ENCODE measurements at regions of chr10 and their contacts with region 1.

Region 1: GRCh38 chr10:42638055-42638820 is at the start of gene ZNF33B:
- DNase-seq: peak; percentile 93 to 98
- H3K4me3 ChIP-seq: peak within 1 kb of the TSS; percentile 68
- H3K27ac ChIP-seq: peak within 1 kb of the TSS; percentile 85
- H3K4me1 ChIP-seq: peaks cover 28% of the 10 kb centered on the region
- H3K27me3 ChIP-seq: no peaks in the 10 kb centered on the region
- CTCF ChIP-seq: no peak
- total RNA-seq, gene ZNF33B: 26.5 and 28.4 TPM in 2 replicates

Region 2: DNA sequence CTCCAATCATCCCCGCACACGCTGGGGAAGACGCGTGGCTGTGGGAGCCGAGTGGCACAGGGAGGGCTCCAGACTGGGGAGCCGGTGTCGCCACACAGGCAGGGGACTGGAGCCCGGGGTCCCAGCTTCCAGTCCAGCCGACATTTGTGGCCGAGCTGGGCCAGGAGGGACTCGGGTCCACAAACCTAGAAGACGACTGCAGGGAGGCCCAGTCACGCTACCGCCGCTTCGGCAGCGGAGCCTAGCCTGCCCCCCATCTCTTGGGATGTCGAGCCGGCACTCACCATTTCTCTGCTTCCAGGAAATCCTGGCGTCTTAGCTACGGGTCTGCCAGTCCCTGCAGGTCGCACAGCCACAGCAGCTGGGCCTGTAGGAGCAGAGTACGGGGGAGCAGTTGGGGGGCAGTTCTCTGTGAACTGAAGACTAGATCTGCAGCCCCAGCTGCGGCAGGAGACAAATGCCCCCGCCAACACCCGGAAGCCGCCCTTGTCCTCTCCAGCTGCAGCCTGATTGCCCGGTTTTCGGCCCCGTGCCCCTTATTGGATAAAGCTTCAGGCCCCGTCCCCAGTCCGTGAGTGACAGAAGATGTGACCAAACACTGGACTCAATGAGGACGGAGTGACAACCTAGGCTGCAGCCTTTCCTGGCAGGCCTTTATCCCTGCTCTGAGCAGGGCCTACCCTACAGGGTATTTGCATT is 270.6 kb before region 1 on chr10:
- CTCF ChIA-PET with region 1: no interaction called
- POLR2A ChIA-PET with region 1: no interaction called
- intact Hi-C with region 1: loop called (anchors 5 kb)
- DNase-seq: peak; percentile 88 to 91
- H3K4me3 ChIP-seq: peak overlapping the region; percentile 89
- H3K27ac ChIP-seq: no peak overlapping the region
- H3K4me1 ChIP-seq: no peaks in the 10 kb centered on the region; the same call in 1 of the 2 replicates
- H3K27me3 ChIP-seq: no peaks in the 10 kb centered on the region
- CTCF ChIP-seq: no peak

Region 3: DNA sequence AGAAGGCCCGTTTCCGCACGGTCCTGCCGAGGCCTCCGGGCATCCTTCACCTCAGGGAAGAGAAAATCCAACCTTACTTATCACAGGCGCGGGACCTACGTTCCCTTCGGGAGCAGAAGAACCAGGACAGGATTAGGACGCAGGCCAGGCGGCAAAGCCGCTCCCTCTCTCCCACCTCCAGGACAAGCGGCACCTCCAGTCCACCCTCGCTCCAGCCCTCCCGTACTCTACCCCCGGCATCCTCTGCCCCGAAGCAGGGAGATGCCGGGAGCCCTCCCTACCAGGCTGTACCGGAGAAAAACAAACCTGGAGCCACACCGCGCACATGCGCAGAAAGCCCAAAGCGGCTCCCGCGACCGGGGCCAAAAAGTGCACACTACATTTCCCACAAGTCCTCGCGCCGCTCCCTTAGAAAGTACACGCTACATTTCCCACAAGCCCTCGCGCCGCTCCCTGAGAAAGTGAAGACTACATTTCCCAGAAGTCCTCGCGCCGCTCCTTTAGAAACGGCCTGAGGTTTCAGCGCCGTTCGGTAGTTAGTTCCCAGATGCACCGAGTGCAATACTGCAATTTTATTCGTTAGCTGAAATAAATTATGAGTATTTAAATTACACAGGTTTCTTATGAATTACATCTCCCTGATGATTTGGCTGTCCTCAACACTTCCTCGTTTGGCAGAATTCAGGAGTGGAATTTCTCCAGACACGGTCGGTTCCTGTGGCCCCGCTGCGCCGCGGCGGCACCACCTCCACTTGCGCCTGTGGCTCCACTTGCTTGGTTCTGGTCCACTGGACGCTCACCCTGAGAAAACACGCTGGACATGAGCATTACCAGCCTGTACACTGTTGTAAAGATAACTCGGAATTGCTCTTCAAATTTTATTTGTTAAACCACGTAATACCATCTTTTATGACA is 85.5 kb before region 1 on chr10:
- CTCF ChIA-PET with region 1: no interaction called
- POLR2A ChIA-PET with region 1: no interaction called
- intact Hi-C with region 1: loop called (anchors 2 kb)
- DNase-seq: peak; percentile 95 to 96
- H3K4me3 ChIP-seq: peak overlapping the region; percentile 76
- H3K27ac ChIP-seq: no peak overlapping the region
- H3K4me1 ChIP-seq: peaks cover 7% of the 10 kb centered on the region
- H3K27me3 ChIP-seq: no peaks in the 10 kb centered on the region
- CTCF ChIP-seq: no peak

Region 4: GRCh38 chr10:42652860-42653259 is 14.6 kb after region 1 on chr10:
- CTCF ChIA-PET with region 1: no interaction called
- POLR2A ChIA-PET with region 1: no interaction called
- intact Hi-C with region 1: no loop called
- DNase-seq: no peak
- H3K4me3 ChIP-seq: no peak overlapping the region
- H3K27ac ChIP-seq: no peak overlapping the region
- H3K4me1 ChIP-seq: no peaks in the 10 kb centered on the region
- H3K27me3 ChIP-seq: no peaks in the 10 kb centered on the region
- CTCF ChIP-seq: no peak

Region 5: DNA sequence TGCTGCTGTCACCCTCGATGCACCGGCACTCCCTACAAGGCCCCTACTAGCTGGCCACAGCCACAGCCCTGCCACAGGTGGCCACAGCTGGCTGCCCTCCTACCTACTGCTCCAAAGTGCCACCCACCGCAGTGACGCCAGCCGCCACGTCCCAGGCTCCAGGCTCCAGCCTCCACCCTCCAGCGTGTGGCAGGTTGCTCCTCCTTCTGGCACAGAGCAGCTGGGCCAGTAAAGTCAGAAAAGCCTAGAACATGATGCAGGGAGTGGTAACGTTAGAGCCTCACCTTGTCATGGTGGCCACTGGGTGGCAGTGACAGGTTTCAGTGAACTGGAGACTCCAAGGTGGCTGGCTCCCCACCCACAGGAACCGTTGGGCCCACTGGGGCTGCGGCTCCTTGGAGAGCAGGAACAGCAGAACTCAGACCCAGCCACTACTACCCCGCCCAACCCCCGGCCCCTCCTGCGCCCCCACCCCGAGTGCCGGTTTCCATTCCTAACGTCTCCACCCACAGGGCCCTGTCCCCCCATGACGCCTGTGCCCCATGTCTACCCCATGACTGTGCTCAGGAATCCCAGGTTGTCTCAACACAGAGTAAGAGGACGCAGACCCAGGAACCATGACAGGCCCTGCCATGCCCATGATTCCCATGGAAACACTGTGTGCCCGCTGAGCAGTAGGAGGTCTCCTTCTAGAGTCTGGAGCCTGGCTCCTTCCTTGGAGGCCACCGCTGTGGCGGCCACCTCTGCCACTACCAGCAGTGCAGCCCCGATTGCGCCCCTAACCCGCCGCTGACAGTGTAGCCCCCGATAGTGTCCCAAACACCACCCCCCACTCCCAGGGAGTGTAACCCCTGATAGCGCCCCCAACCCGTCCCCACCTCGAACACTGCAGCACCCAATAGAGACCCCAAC is 52.5 kb after region 1 on chr10:
- CTCF ChIA-PET with region 1: no interaction called
- POLR2A ChIA-PET with region 1: interaction called, 5 read pairs
- intact Hi-C with region 1: loop called (anchors 1 kb)
- DNase-seq: peak; percentile 8 to 52
- H3K4me3 ChIP-seq: peak overlapping the region; percentile 48; the same call in 1 of the 2 replicates
- H3K27ac ChIP-seq: no peak overlapping the region
- H3K4me1 ChIP-seq: no peaks in the 10 kb centered on the region
- H3K27me3 ChIP-seq: no peaks in the 10 kb centered on the region
- CTCF ChIP-seq: peak; percentile 49

Measured in PC-9 (cell line).